AG04449 (cell line): ENCODE measurements at regions of chr3 and their contacts with region 1.

Region 1: GRCh38 chr3:185084901-185085300 is 68.0 kb downstream of the C3orf70 start:
- DNase-seq: peak; percentile 73
- H3K4me3 ChIP-seq: no peak overlapping the region
- CTCF ChIP-seq: peak; percentile 65

Region 2: DNA sequence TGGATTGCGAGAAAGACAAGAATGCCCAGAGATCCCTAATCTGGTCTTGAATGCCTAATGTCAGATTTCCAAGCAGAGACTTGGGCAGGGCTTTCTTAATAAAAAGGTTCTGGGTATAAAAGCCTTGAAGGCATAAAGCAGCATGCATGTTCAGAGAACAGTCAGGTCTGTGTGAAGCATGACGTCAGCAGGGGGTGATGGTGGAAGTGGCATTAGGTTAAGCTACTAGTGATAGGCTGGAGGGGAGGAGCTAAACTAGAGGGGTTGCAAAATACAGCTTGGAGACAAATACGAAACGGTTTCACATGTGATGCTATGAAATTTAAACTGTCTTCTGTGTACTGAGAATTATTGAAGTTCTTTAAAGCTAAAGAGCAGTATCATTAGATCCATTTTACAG is 147.3 kb before region 1 on chr3:
- CTCF ChIA-PET with region 1: no interaction called
- POLR2A ChIA-PET with region 1: no interaction called
- DNase-seq: no peak
- H3K4me3 ChIP-seq: no peak overlapping the region
- CTCF ChIP-seq: no peak

Region 3: DNA sequence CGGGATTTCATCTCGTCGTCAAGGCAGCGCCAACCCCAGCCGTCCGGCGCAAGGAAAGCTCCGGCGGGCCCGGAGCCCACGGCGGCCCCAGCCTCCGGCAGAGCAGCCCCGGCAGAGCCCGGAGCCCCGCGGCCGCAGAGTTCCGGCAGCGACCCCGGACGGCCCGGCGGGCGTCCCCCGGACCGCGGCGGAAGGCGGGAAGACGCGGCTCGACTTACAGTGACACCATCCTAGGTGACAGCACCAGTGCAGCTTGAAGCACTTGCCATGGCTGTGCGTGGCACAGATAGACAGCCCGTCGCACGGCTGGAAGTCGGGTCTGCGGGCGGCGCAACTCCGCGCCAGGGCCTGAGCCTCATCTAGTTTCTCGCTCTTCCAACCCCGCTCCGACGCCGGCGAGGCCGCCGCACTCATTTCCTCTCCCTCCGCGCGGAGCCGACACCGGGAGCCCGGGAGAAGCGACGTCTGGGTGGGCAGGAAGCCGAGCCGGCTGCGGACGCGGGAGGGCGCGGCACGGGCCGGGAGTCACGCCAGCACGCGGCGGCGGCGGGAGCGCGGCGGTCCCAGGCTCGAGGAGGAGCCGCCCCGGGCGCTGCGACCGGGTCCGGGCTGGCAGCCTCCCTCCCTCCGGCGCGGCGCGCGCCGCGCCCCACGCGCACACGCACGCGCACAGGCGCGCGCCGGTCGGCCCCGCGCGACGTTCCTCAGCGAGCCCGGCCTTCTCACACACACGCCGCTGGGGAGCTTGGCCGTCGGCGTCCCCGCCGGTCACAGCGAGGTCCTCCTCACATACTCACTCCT is 67.7 kb after region 1 on chr3 and contains the start of gene C3orf70:
- CTCF ChIA-PET with region 1: interaction called, 10 read pairs
- POLR2A ChIA-PET with region 1: no interaction called
- DNase-seq: no peak
- H3K4me3 ChIP-seq: peak within 1 kb of the TSS; percentile 83
- CTCF ChIP-seq: no peak